Posterior cingulate gyrus (tissue), 11 donors: ENCODE measurements at regions of chr15 and their contacts with region 1.

Region 1: GRCh38 chr15:96356494-96357455 is 26.3 kb downstream of the NR2F2 start:
- DNase-seq: peak; percentile 48 to 95 (median 75)

Region 2: GRCh38 chr15:95259513-95259912 is 1097.3 kb before region 1 on chr15:
- intact Hi-C with region 1: loop called (anchors 2 kb)
- DNase-seq: peak in 9 of 10 donors; percentile 30 to 91 (median 64)

Region 3: DNA sequence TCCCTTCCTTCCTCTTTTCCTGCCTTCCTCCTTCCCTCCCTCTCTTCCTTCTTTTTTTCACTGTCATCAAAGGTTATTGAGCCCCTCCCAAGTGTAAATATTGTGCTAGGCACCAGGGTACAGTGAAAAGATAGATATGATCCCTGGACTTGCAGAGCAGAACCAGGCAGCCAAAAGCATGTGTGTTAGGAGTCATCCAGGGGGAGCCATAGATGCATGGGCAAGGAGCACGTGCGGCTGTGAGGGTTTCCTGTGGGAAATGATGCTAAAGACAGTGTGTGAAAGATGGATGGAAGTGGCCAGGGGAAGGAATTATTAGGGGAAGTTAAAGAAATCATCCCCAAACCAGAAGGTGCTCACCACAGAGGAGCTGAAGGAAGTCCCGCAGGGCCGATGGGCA is 38.9 kb after region 1 on chr15:
- intact Hi-C with region 1: no loop called
- DNase-seq: no peak

Region 4: GRCh38 chr15:96870580-96870979 is 513.8 kb after region 1 on chr15:
- intact Hi-C with region 1: no loop called
- DNase-seq: no peak

Region 5: GRCh38 chr15:96893159-96893906 is 536.6 kb after region 1 on chr15:
- intact Hi-C with region 1: loop called (anchors 5 kb)
- DNase-seq: no peak

Region 6: GRCh38 chr15:97234851-97235610 is 878.3 kb after region 1 on chr15:
- intact Hi-C with region 1: loop called (anchors 5 kb)
- DNase-seq: peak in 5 of 10 donors; percentile 30 to 89 (median 58)

Region 7: DNA sequence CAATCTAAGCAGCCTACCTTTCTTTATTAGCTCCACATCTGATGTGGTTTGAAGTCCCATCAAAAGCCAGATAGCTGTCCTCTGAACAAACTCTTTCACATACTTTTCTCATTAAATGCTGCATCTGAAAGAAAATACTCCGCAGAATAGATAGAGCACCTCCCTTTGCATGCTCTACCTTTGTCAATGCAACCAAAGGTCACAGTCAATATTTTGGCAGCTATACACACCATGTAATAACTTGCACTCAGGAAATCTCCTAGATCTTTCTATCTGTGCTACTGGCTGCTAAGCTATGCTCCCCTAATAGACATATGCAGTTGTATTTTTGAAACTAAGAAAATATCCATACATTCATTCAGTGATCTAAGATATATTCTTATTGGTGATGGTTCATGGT is 1399.0 kb after region 1 on chr15:
- intact Hi-C with region 1: loop called (anchors 2 kb)
- DNase-seq: no peak